B cell (primary cell): ENCODE measurements at regions of chr6 and their contacts with region 1.

Region 1: GRCh38 chr6:167113935-167114910 is 8.7 kb upstream of the CCR6 start:
- DNase-seq: peak; percentile 98
- ATAC-seq: peak; percentile 78
- H3K4me3 ChIP-seq: peak overlapping the region; percentile 46 to 77 (median 61)
- H3K4me3 Mint-ChIP-seq: peak overlapping the region; percentile 84
- H3K27ac ChIP-seq: peak overlapping the region; percentile 98 to 100
- H3K27ac Mint-ChIP-seq: peak overlapping the region; percentile 96
- H3K4me1 ChIP-seq: peaks cover 85 to 94% of the 10 kb centered on the region in 2 donors
- H3K4me1 Mint-ChIP-seq: peaks cover 94% of the 10 kb centered on the region
- H3K27me3 ChIP-seq: no peaks in the 10 kb centered on the region
- H3K27me3 Mint-ChIP-seq: no peaks in the 10 kb centered on the region
- CTCF ChIP-seq: no peak

Region 2: GRCh38 chr6:166956444-166957086 is 157.7 kb before region 1 on chr6 and contains the start of gene RNASET2:
- CTCF ChIA-PET with region 1: interaction called, 4 read pairs
- POLR2A ChIA-PET with region 1: interaction called, 11 read pairs
- intact Hi-C with region 1: no loop called
- DNase-seq: peak; percentile 96
- ATAC-seq: peak; percentile 85
- H3K4me3 ChIP-seq: peak within 1 kb of the TSS; percentile 79 to 97 (median 89)
- H3K4me3 Mint-ChIP-seq: peak within 1 kb of the TSS; percentile 93
- H3K27ac ChIP-seq: peak within 1 kb of the TSS; percentile 94 to 98
- H3K27ac Mint-ChIP-seq: peak within 1 kb of the TSS; percentile 100
- H3K4me1 ChIP-seq: peaks cover 65 to 78% of the 10 kb centered on the region in 2 donors
- H3K4me1 Mint-ChIP-seq: peaks cover 73% of the 10 kb centered on the region
- H3K27me3 ChIP-seq: no peaks in the 10 kb centered on the region
- H3K27me3 Mint-ChIP-seq: no peaks in the 10 kb centered on the region
- CTCF ChIP-seq: no peak
- total RNA-seq, gene RNASET2: 293 and 302 TPM in 2 replicates

Region 3: DNA sequence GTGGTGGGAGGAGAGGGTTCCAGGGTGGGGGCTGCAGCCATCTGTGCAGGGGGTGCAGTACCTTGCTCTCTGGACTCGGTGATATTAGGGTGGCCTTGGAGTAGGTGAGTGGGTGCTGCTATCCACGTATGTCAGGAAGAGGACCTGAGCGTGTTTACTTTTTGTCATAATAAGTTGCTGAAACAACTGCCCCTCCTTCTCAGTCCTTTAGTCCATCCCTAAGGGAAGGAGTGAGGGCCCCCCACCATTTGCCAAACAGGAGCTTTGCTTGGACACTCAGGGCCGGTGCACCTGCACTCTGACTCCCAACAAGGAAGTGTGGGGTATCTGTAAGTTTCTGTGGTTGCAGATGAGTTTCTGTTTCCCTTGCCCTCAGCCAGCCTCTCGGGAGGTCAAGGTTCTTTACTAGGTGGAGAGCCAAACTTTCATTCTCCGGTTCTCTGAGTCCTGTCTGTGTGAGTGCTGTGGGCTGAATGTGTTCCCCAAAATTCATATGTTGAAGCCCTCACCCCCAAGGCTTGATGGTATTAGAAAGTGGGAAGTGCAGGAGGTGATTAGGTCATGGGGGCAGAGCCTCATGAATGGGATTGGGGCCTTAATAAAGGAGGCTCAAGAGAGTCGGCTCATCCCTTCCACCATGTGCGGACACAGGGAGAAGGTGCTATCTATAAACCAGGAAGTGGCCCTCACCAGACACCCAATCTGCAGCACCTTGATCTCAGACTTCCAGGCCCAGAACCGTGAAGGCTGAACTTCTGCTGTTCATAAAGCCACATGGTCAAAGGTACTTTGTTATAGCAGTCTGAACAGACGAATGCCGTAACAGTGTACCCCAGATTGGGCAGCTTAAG is 11.0 kb before region 1 on chr6:
- CTCF ChIA-PET with region 1: interaction called, 7 read pairs
- POLR2A ChIA-PET with region 1: interaction called, 432 read pairs
- intact Hi-C with region 1: loop called (anchors 1 kb)
- DNase-seq: peak; percentile 84
- ATAC-seq: peak; percentile 74
- H3K4me3 ChIP-seq: peak overlapping the region in 2 of 5 experiments; percentile 2 to 7
- H3K4me3 Mint-ChIP-seq: peak overlapping the region; percentile 85
- H3K27ac ChIP-seq: peak overlapping the region; percentile 83 to 92
- H3K27ac Mint-ChIP-seq: peak overlapping the region; percentile 95
- H3K4me1 ChIP-seq: peaks cover 95 to 99% of the 10 kb centered on the region in 2 donors
- H3K4me1 Mint-ChIP-seq: peaks cover 95% of the 10 kb centered on the region
- H3K27me3 ChIP-seq: no peaks in the 10 kb centered on the region
- H3K27me3 Mint-ChIP-seq: no peaks in the 10 kb centered on the region
- CTCF ChIP-seq: no peak